CD8-positive, alpha-beta memory T cell (primary cell): ENCODE measurements at regions of chr2 and their contacts with region 1.

Region 1: GRCh38 chr2:189661148-189661956 is at the start of gene ASNSD1:
- DNase-seq: peak; percentile 99 to 100 (median 99)
- H3K4me3 ChIP-seq: peak within 1 kb of the TSS; percentile 91
- H3K4me3 Mint-ChIP-seq: no peak within 1 kb of the TSS
- H3K27ac ChIP-seq: peak within 1 kb of the TSS; percentile 89
- H3K27ac Mint-ChIP-seq: peak within 1 kb of the TSS in 2 of 8 donors; percentile 87 to 96
- H3K4me1 ChIP-seq: peaks cover 35% of the 10 kb centered on the region
- H3K4me1 Mint-ChIP-seq: peaks cover 6 to 49% (median 44%) of the 10 kb centered on the region in 3 donors
- H3K27me3 ChIP-seq: no peaks in the 10 kb centered on the region
- H3K27me3 Mint-ChIP-seq: no peaks in the 10 kb centered on the region
- total RNA-seq, gene ASNSD1: 54.2 to 58.0 TPM

Region 2: GRCh38 chr2:189580658-189581353 is 80.5 kb before region 1 on chr2 and contains the start of gene SLC40A1:
- CTCF ChIA-PET with region 1: interaction called, 6 read pairs
- POLR2A ChIA-PET with region 1: interaction called, 11 read pairs
- DNase-seq: peak; percentile 6 to 72 (median 50)
- H3K4me3 ChIP-seq: peak within 1 kb of the TSS; percentile 71
- H3K4me3 Mint-ChIP-seq: peak within 1 kb of the TSS; percentile 82 to 92 (median 84)
- H3K27ac ChIP-seq: peak within 1 kb of the TSS; percentile 62
- H3K27ac Mint-ChIP-seq: peak within 1 kb of the TSS in 7 of 8 donors; percentile 48 to 83 (median 70)
- H3K4me1 ChIP-seq: no peaks in the 10 kb centered on the region
- H3K4me1 Mint-ChIP-seq: peaks cover 16 to 41% (median 29%) of the 10 kb centered on the region in 3 donors
- H3K27me3 ChIP-seq: no peaks in the 10 kb centered on the region
- H3K27me3 Mint-ChIP-seq: peaks cover 25 to 44% of the 10 kb centered on the region in 2 donors
- total RNA-seq, gene SLC40A1: 1.9 to 2.7 TPM

Region 3: GRCh38 chr2:189674374-189675112 is 13.2 kb after region 1 on chr2 and contains the start of gene ANKAR:
- CTCF ChIA-PET with region 1: interaction called, 76 read pairs
- POLR2A ChIA-PET with region 1: interaction called, 22 read pairs
- DNase-seq: peak; percentile 74 to 87 (median 83)
- H3K4me3 ChIP-seq: peak within 1 kb of the TSS; percentile 69
- H3K4me3 Mint-ChIP-seq: peak within 1 kb of the TSS; percentile 92 to 99 (median 96)
- H3K27ac ChIP-seq: peak within 1 kb of the TSS; percentile 77
- H3K27ac Mint-ChIP-seq: peak within 1 kb of the TSS; percentile 96 to 100 (median 99)
- H3K4me1 ChIP-seq: peaks cover 18% of the 10 kb centered on the region
- H3K4me1 Mint-ChIP-seq: peaks cover 42 to 51% (median 46%) of the 10 kb centered on the region in 3 donors
- H3K27me3 ChIP-seq: no peaks in the 10 kb centered on the region
- H3K27me3 Mint-ChIP-seq: no peaks in the 10 kb centered on the region
- total RNA-seq, gene ANKAR: 3.2 to 3.3 TPM

Region 4: GRCh38 chr2:189685540-189686229 is 24.3 kb after region 1 on chr2:
- CTCF ChIA-PET with region 1: interaction called, 11 read pairs
- POLR2A ChIA-PET with region 1: no interaction called
- DNase-seq: no peak
- H3K4me3 ChIP-seq: no peak overlapping the region
- H3K4me3 Mint-ChIP-seq: no peak overlapping the region
- H3K27ac ChIP-seq: no peak overlapping the region
- H3K27ac Mint-ChIP-seq: peak overlapping the region in 4 of 8 donors; percentile 31 to 81 (median 50)
- H3K4me1 ChIP-seq: peaks cover 10% of the 10 kb centered on the region
- H3K4me1 Mint-ChIP-seq: peaks cover 17 to 40% (median 34%) of the 10 kb centered on the region in 3 donors
- H3K27me3 ChIP-seq: no peaks in the 10 kb centered on the region
- H3K27me3 Mint-ChIP-seq: no peaks in the 10 kb centered on the region

Region 5: GRCh38 chr2:189698020-189698887 is 36.9 kb after region 1 on chr2:
- CTCF ChIA-PET with region 1: interaction called, 57 read pairs
- POLR2A ChIA-PET with region 1: interaction called, 5 read pairs
- DNase-seq: peak in 3 of 5 donors; percentile 16 to 46 (median 38)
- H3K4me3 ChIP-seq: no peak overlapping the region
- H3K4me3 Mint-ChIP-seq: peak overlapping the region in 1 of 7 donors; percentile 3
- H3K27ac ChIP-seq: no peak overlapping the region
- H3K27ac Mint-ChIP-seq: no peak overlapping the region
- H3K4me1 ChIP-seq: no peaks in the 10 kb centered on the region
- H3K4me1 Mint-ChIP-seq: peaks cover 0 to 5% (median 1%) of the 10 kb centered on the region in 3 donors
- H3K27me3 ChIP-seq: no peaks in the 10 kb centered on the region
- H3K27me3 Mint-ChIP-seq: no peaks in the 10 kb centered on the region

Region 6: DNA sequence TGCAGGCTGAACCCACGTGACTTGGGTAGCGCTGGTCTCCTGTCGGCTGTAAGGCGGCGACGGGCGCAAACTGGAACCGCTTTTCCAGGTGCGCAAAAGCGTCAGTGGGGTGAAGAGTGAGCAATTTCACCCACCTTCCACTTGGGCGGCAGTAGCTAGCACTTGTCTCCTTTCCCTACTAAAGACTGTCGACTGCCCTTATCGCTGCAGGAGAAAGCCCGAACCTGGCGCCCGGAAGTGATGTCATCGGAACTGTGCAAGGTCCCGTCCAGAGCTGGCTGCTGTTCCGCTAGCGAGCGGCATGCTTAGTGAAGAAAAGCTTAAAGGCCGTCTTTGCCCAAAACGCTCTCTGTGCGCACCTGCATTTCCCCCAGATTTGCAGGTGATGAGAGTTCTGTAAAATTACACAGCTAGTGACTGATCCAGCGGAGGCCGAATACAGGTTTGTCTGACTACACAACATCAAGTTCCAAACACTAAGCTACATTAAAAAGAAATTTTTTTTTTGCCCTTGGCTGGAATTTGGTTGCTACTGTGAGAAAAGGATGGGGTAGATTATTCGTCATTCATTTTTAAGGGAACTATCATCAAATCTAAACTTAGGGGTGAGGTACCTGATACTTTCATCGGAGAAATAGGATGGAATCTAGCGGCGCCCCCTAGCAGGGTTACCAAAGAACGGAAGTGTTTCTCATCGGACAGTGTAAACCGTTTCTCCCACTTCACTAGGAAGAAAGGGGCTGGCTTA is 101.4 kb after region 1 on chr2 and contains the start of gene OSGEPL1:
- CTCF ChIA-PET with region 1: interaction called, 38 read pairs
- POLR2A ChIA-PET with region 1: interaction called, 14 read pairs
- DNase-seq: peak; percentile 86 to 95 (median 89)
- H3K4me3 ChIP-seq: peak within 1 kb of the TSS; percentile 81
- H3K4me3 Mint-ChIP-seq: peak within 1 kb of the TSS; percentile 94 to 100 (median 96)
- H3K27ac ChIP-seq: peak within 1 kb of the TSS; percentile 83
- H3K27ac Mint-ChIP-seq: peak within 1 kb of the TSS; percentile 96 to 100 (median 99)
- H3K4me1 ChIP-seq: peaks cover 14% of the 10 kb centered on the region
- H3K4me1 Mint-ChIP-seq: peaks cover 10 to 23% (median 18%) of the 10 kb centered on the region in 3 donors
- H3K27me3 ChIP-seq: no peaks in the 10 kb centered on the region
- H3K27me3 Mint-ChIP-seq: no peaks in the 10 kb centered on the region
- total RNA-seq, gene OSGEPL1: 12.5 to 13.7 TPM